Astrocyte of the cerebellum (primary cell): ENCODE measurements at regions of chr9 and their contacts with region 1.

Region 1: GRCh38 chr9:122767817-122768216 is 20.9 kb upstream of the OR5C1 start:
- DNase-seq: no peak
- H3K4me3 ChIP-seq: no peak overlapping the region
- CTCF ChIP-seq: no peak

Region 2: GRCh38 chr9:122498883-122499288 is 268.9 kb before region 1 on chr9:
- in situ Hi-C with region 1: loop called (anchors 25 kb)
- DNase-seq: peak; percentile 3
- H3K4me3 ChIP-seq: no peak overlapping the region
- CTCF ChIP-seq: peak; percentile 76